ENCODE measurements at regions of chr10 and their contacts with region 1.

Region 1: DNA sequence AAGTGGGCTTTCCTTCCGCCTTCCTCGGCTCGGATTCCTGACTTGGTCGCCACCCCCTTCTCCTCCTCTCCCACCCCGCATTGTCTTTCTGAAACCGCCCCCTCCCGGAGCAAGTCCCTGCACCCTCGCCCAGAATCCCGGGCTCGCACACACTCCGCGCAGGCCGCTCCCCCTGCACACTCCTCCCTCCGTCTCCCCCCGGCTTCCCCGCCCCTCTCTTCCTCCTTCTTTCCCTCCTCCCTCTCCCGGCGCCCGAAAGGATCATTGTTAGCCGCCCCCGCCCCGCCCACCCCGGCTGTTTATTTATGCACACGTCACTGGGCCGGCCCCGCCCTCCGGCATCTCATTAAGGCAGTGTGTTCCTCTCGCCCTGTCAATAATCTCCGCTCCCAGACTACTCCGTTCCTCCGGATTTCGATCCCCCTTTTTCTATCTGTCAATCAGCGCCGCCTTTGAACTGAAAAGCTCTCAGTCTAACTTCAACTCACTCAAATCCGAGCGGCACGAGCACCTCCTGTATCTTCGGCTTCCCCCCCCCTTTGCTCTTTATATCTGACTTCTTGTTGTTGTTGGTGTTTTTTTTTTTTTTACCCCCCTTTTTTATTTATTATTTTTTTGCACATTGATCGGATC is at the start of gene TCF7L2:
- DNase-seq: peak; percentile 96 to 98
- H3K4me3 ChIP-seq: peak within 1 kb of the TSS; percentile 3 to 83 (median 70)
- H3K27ac ChIP-seq: peak within 1 kb of the TSS; percentile 88 to 98 (median 96)
- H3K4me1 ChIP-seq: peaks cover 15 to 26% of the 10 kb centered on the region in 2 donors
- H3K27me3 ChIP-seq: no peaks in the 10 kb centered on the region
- CTCF ChIP-seq: peak in 1 of 6 experiments; percentile 6
- POLR2A ChIP-seq: peak; percentile 67 to 90
- total RNA-seq, gene TCF7L2: 16.2 to 67.1 (median 25.3) TPM

Region 2: GRCh38 chr10:112811740-112812551 is 138.0 kb before region 1 on chr10:
- intact Hi-C with region 1: loop called (anchors 10 kb)
- DNase-seq: peak; percentile 73 to 85
- H3K4me3 ChIP-seq: no peak overlapping the region
- H3K27ac ChIP-seq: peak overlapping the region in 2 of 3 donors; percentile 19 to 21
- H3K4me1 ChIP-seq: peaks cover 0 to 7% of the 10 kb centered on the region in 2 donors
- H3K27me3 ChIP-seq: no peaks in the 10 kb centered on the region
- CTCF ChIP-seq: peak in 1 of 6 experiments; percentile 26
- POLR2A ChIP-seq: no peak

Region 3: GRCh38 chr10:113060201-113061053 is 110.4 kb after region 1 on chr10:
- intact Hi-C with region 1: loop called (anchors 10 kb)
- DNase-seq: peak; percentile 65 to 75
- H3K4me3 ChIP-seq: peak overlapping the region in 1 of 3 donors; percentile 0
- H3K27ac ChIP-seq: peak overlapping the region; percentile 91 to 94 (median 92)
- H3K4me1 ChIP-seq: peaks cover 62 to 77% of the 10 kb centered on the region in 2 donors
- H3K27me3 ChIP-seq: no peaks in the 10 kb centered on the region
- CTCF ChIP-seq: peak in 1 of 6 experiments; percentile 3
- POLR2A ChIP-seq: peak in 1 of 2 donors; percentile 63

Region 4: GRCh38 chr10:113126229-113127201 is 176.5 kb after region 1 on chr10:
- intact Hi-C with region 1: loop called (anchors 10 kb)
- DNase-seq: peak; percentile 74 to 78
- H3K4me3 ChIP-seq: peak overlapping the region in 1 of 3 donors; percentile 9
- H3K27ac ChIP-seq: peak overlapping the region in 1 of 3 donors; percentile 17
- H3K4me1 ChIP-seq: peaks cover 0 to 6% of the 10 kb centered on the region in 2 donors
- H3K27me3 ChIP-seq: no peaks in the 10 kb centered on the region
- CTCF ChIP-seq: peak in 5 of 6 experiments; percentile 25 to 86 (median 65)
- POLR2A ChIP-seq: no peak